ENCODE measurements at regions of chr5 and their contacts with region 1.

Region 1: DNA sequence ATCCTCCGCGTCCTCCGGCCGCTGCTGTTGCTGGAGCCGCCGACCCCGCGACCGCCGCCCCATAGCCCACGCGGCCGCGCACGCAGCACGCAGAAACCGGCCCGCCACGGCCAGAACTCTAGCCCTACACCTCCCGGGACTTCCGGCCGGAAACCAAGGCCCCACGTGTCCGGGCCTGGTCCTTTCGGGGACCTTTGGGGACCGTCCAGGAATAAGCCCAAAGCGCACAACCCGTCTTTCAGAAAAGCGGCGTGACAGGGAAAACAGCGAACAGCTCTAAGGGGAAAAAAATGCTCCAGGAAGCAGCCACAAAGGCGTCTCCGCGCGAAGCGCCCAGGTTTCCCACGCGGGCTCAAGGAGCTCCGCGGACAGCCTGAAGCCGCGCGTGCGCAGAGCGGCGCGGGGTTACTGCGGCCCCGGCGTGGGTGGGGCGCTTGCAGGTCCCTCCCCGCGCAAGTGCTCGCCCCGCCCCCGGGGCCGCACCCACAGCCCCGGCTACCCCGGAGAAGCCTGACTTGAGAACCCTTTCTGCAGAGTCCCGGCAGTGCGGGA is at the starts of genes NSUN2 and SRD5A1:
- DNase-seq: peak; percentile 89
- H3K4me3 Mint-ChIP-seq: peak within 1 kb of the TSS; percentile 94
- H3K27ac Mint-ChIP-seq: peak within 1 kb of the TSS; percentile 98
- H3K4me1 Mint-ChIP-seq: peaks cover 28% of the 10 kb centered on the region
- H3K27me3 Mint-ChIP-seq: no peaks in the 10 kb centered on the region
- total RNA-seq, gene NSUN2: 124 and 125 TPM in 2 replicates
- total RNA-seq, gene SRD5A1: 15.3 and 16.0 TPM in 2 replicates

Region 2: GRCh38 chr5:6377905-6378765 is 254.9 kb before region 1 on chr5 and contains the start of gene MED10:
- intact Hi-C with region 1: loop called (anchors 1 kb)
- DNase-seq: peak; percentile 95
- H3K4me3 Mint-ChIP-seq: peak within 1 kb of the TSS; percentile 96
- H3K27ac Mint-ChIP-seq: peak within 1 kb of the TSS; percentile 93
- H3K4me1 Mint-ChIP-seq: peaks cover 37% of the 10 kb centered on the region
- H3K27me3 Mint-ChIP-seq: peaks cover 3% of the 10 kb centered on the region
- total RNA-seq, gene MED10: 53.3 and 56.5 TPM in 2 replicates

Region 3: GRCh38 chr5:6712577-6713275 is 79.7 kb after region 1 on chr5:
- intact Hi-C with region 1: loop called (anchors 1 kb)
- DNase-seq: peak; percentile 97
- H3K4me3 Mint-ChIP-seq: peak overlapping the region; percentile 86
- H3K27ac Mint-ChIP-seq: peak overlapping the region; percentile 93
- H3K4me1 Mint-ChIP-seq: peaks cover 32% of the 10 kb centered on the region
- H3K27me3 Mint-ChIP-seq: no peaks in the 10 kb centered on the region

Region 4: DNA sequence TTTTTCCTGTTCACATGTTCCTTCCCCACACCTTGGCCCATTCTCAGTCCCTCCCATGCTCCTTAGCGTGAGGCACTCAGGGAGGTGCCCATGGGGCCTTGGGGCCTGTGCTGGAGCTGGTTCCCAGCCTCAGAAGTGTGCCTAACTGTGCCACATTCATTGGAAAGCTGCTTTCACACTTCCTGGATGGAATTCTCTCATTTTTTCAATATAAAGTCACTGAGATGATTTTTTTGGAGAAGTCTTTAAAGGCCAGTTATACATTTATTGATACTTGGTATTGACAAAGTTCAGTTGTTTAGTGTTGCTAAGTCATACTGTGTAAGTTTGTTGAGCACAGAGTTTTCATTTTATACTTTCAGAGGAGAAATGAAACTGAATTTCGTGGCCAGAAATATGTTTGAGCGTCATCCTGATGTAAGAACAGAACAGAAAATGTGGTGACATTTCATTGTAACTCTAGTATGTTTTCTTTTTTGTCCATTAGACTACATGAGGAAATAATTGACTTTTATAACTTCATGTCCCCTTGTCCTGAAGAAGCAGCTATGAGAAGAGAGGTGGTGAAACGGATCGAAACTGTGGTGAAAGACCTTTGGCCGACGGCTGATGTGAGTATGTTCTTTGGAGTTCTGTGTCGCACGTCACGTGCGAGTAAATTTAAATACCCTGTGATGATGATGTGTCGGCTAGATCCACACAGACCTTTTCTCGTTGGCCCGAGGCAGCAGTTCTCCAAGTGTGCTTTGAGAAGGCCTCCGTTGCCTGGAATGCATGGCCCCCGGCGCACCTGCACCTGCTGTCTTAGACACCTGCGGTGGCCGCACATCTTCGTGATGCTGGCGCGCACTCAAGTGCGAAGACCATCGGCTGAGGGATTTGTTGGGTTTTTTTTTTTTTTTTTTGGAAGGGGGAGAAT is 104.3 kb after region 1 on chr5:
- intact Hi-C with region 1: loop called (anchors 2 kb)
- DNase-seq: no peak
- H3K4me3 Mint-ChIP-seq: peak overlapping the region; percentile 50
- H3K27ac Mint-ChIP-seq: peak overlapping the region; percentile 93
- H3K4me1 Mint-ChIP-seq: peaks cover 43% of the 10 kb centered on the region
- H3K27me3 Mint-ChIP-seq: no peaks in the 10 kb centered on the region

Region 5: DNA sequence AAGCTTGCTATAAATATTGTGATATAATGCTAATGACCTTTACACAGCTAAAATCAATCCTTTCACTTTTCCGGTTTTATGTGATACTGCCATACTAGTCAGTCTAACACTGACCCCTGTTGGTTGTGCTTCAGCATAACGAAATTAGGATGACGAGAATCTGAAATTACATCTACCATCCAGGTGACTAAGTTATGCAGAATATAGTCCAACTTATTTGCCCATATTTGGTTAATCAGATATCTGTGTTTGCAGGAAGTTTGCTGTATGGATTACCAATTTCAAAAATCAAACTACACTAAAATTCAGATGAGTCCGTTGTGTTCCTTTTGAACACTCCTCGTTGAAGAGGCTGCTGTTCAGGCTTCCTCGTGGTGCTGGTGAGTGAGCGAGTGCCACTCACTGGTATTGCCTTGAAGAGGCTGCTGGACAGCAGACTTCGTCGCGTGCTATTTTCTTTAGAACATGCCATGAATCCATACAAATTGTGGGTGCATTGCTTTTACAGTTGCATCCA is 112.8 kb after region 1 on chr5:
- intact Hi-C with region 1: loop called (anchors 1 kb)
- DNase-seq: no peak
- H3K4me3 Mint-ChIP-seq: no peak overlapping the region
- H3K27ac Mint-ChIP-seq: peak overlapping the region; percentile 42
- H3K4me1 Mint-ChIP-seq: peaks cover 14% of the 10 kb centered on the region
- H3K27me3 Mint-ChIP-seq: no peaks in the 10 kb centered on the region

Region 6: GRCh38 chr5:7868773-7869473 is 1235.9 kb after region 1 on chr5 and contains the starts of genes FASTKD3 and MTRR:
- intact Hi-C with region 1: loop called (anchors 10 kb)
- DNase-seq: peak; percentile 87
- H3K4me3 Mint-ChIP-seq: peak within 1 kb of the TSS; percentile 99
- H3K27ac Mint-ChIP-seq: peak within 1 kb of the TSS; percentile 83
- H3K4me1 Mint-ChIP-seq: peaks cover 62% of the 10 kb centered on the region
- H3K27me3 Mint-ChIP-seq: no peaks in the 10 kb centered on the region
- total RNA-seq, gene FASTKD3: 11.6 and 12.7 TPM in 2 replicates
- total RNA-seq, gene MTRR: 61.9 and 71.4 TPM in 2 replicates

Measured in activated T-helper 2 cell treated with anti-CD3 and anti-CD28 coated beads, Interferon-gamma antibody, Interleukin-2, Interleukin-4, amounts not matched to agents 10 μg/mL and 5 μg/mL and 100 μg/mL, durations not matched to agents 14 hours and 24 hours and 36 hours (primary cell).